A549 (cell line): ENCODE measurements at regions of chr7 and their contacts with region 1.

Region 1: DNA sequence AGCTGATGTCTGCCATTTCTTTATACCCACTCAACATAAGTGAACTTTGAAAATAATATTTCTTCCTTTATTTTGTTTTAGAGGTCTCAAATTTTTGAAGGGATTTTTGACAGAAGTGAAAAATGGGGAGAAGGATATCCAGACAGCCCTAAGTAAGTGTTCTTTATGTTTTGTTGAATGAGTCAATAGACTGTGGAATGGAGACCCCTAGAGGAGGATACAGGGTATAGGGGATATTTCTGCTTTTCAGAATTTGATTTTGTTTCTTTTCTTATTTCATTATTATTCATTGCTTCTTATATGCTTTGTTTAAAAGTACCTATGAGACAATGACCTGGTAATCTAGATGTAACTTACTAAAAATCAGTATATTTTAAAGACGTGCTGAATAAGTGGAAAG is 34.4 kb downstream of the PLEKHA8 start:
- DNase-seq: peak; percentile 46 to 51
- ATAC-seq: peak; percentile 86 to 93; a peak in 5 of 6 replicates
- H3K4me3 ChIP-seq: no peak overlapping the region
- H3K27ac ChIP-seq: no peak overlapping the region
- H3K4me1 ChIP-seq: no peaks in the 10 kb centered on the region
- CTCF ChIP-seq: peak; percentile 79
- EP300 ChIP-seq: no peak
- POLR2A ChIP-seq: no peak
- RAD21 ChIP-seq: peak; percentile 70 to 83; a peak in 4 of 5 replicates

Region 2: GRCh38 chr7:29871787-29872396 is 190.7 kb before region 1 on chr7:
- CTCF ChIA-PET with region 1: interaction called, 11 read pairs
- POLR2A ChIA-PET with region 1: no interaction called
- DNase-seq: peak in 1 of 2 experiments; percentile 17
- ATAC-seq: no peak
- H3K4me3 ChIP-seq: peak overlapping the region; percentile 36; the same call in 2 of the 3 replicates
- H3K27ac ChIP-seq: no peak overlapping the region
- H3K4me1 ChIP-seq: no peaks in the 10 kb centered on the region; the same call in 2 of the 3 replicates
- CTCF ChIP-seq: no peak
- EP300 ChIP-seq: no peak
- POLR2A ChIP-seq: no peak
- RAD21 ChIP-seq: no peak

Region 3: DNA sequence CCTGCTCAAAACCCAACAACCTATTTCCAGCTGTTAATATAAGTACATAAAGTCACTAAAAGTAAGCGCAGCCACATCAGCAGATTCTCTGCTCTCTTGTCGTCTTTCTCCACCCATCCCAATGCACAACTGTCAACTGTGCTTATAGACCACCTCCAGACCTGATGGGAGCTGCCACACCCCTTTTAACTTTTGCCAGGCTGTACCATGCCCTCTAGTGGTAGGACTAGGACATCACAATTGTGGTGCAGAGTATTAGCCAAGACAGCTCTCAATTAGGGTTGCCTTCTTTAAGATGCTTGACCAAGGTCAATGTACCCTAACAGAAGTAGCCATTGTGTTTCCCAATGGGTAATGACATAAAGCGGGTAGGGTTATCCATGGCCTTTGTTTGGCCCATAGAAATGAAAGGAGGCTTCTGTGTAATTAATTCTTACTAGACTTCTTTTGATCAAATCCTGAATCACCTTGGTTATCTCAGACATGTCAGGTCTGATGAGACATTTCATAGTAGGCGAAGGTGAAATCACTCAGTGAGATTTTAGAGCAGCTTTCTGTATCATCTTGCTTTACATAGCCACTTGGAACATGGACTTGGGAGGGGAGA is 141.1 kb before region 1 on chr7:
- CTCF ChIA-PET with region 1: interaction called, 23 read pairs
- POLR2A ChIA-PET with region 1: no interaction called
- DNase-seq: peak; percentile 28 to 71
- ATAC-seq: peak; percentile 91 to 95
- H3K4me3 ChIP-seq: no peak overlapping the region
- H3K27ac ChIP-seq: no peak overlapping the region
- H3K4me1 ChIP-seq: no peaks in the 10 kb centered on the region
- CTCF ChIP-seq: peak; percentile 85
- EP300 ChIP-seq: no peak
- POLR2A ChIP-seq: no peak
- RAD21 ChIP-seq: peak; percentile 68 to 78

Region 4: GRCh38 chr7:30041521-30042269 is 20.9 kb before region 1 on chr7:
- CTCF ChIA-PET with region 1: interaction called, 10 read pairs
- POLR2A ChIA-PET with region 1: no interaction called
- DNase-seq: no peak
- ATAC-seq: no peak
- H3K4me3 ChIP-seq: no peak overlapping the region
- H3K27ac ChIP-seq: no peak overlapping the region
- H3K4me1 ChIP-seq: no peaks in the 10 kb centered on the region
- CTCF ChIP-seq: no peak
- EP300 ChIP-seq: no peak
- POLR2A ChIP-seq: no peak
- RAD21 ChIP-seq: no peak